K562 (cell line): ENCODE measurements at regions of chr7 and their contacts with region 1.

Region 1: DNA sequence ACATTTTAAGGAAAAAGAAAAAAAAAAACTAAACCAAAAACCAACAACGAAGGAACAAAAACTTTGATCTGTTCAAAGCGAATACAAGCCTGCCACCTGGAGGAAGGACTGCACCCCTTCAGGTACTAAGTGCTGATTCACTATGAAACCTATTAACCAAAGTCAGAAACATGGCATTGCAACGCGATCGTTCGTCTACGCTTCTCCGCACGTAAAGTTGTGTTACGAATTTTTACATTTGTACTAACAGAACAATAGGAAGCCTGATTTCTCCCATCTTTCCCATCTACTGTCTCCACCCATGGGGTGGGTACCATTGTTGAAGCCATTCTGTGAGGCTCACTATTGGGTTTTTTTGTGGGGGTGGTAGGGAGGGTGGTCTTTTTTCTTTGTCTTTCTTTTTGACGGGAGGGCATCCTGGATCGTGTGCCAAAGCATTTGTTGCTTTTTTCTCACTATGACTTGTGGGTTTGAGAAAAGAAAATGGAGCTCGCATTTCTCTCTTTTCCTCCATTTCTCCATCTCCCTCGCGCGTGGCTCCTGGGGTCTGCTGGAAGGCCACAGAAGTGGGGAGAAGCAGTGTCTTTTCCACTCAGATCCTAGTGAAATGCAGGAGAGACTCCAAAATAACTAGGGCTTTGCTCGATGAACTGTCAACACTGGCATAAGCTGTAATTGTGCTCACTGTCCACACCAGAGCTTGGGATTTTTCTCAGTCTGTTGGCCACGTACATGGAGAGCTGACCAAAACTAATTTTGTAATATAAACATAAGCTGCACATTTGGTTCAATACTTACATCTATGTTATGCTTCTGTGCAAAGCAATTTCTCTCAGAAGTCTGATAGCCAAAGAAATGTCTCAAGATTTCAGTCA is 100.9 kb upstream of the YAE1 start:
- DNase-seq: peak; percentile 52 to 70 (median 60)
- ATAC-seq: peak; percentile 95
- H3K4me3 ChIP-seq: no peak overlapping the region
- H3K27ac ChIP-seq: no peak overlapping the region
- H3K4me1 ChIP-seq: peaks cover 4 to 9% of the 10 kb centered on the region in 2 experiments; a peak in 4 of 5 replicates
- H3K27me3 ChIP-seq: peaks cover 7 to 8% of the 10 kb centered on the region in 2 experiments; a peak in 3 of 5 replicates
- CTCF ChIP-seq: peak; percentile 65 to 85 (median 80)
- EP300 ChIP-seq: no peak
- POLR2A ChIP-seq: no peak
- RAD21 ChIP-seq: peak; percentile 69 to 80

Region 2: DNA sequence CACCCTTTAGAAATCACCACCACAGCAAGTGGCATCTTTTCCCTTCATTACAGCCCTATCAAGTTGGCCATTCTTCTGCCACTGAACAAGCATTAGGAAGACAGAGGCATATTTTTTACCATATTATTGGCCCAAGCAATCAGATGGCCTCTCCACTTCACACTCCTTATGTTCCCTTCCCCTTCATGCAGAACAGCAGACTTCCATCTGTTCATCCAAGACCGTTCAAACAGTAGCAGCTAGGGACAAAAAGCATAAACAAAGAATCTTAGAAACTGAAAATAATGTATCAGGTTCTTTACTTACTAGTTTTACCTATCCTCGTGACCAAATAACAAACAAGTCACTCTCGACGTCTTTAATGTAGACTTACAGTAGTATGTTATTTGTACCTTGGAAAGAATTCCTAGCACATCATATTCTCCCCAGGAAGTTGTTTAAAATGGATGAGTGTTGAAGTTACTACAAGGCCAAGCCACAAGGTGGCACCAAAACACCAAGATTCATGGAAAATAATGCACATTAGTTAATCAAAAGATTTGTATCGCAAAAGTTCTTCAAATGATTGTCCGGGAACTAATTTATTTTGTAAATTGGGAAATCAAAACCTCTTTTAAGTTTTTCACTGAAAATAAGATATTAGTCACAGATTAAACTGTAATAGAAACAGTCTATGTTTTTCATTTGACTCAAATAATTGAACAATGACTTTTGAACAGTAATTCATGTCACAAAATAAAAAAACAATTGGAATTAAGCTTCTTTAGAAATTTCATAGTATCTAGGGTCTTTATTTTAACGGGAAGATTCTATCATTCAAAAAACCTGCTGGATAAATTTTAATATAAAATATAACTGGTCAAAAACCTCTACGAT is 668.4 kb before region 1 on chr7:
- CTCF ChIA-PET with region 1: interaction called, 20 read pairs
- POLR2A ChIA-PET with region 1: no interaction called
- in situ Hi-C with region 1: loop called (anchors 10 kb)
- intact Hi-C with region 1: loop called (anchors 1 kb)
- DNase-seq: peak; percentile 25 to 64 (median 37)
- ATAC-seq: peak; percentile 69
- H3K4me3 ChIP-seq: no peak overlapping the region
- H3K27ac ChIP-seq: no peak overlapping the region
- H3K4me1 ChIP-seq: no peaks in the 10 kb centered on the region
- H3K27me3 ChIP-seq: no peaks in the 10 kb centered on the region
- CTCF ChIP-seq: peak; percentile 22 to 78 (median 65); a peak in 5 of 6 replicates
- EP300 ChIP-seq: no peak
- POLR2A ChIP-seq: no peak
- RAD21 ChIP-seq: peak; percentile 79 to 88

Region 3: GRCh38 chr7:38932509-38933168 is 532.7 kb before region 1 on chr7:
- CTCF ChIA-PET with region 1: interaction called, 19 read pairs
- POLR2A ChIA-PET with region 1: no interaction called
- in situ Hi-C with region 1: loop called (anchors 5 kb)
- intact Hi-C with region 1: loop called (anchors 1 kb)
- DNase-seq: peak; percentile 42 to 74 (median 55)
- ATAC-seq: peak; percentile 75
- H3K4me3 ChIP-seq: no peak overlapping the region
- H3K27ac ChIP-seq: no peak overlapping the region
- H3K4me1 ChIP-seq: 0 out of 5 replicates have a peak, but pooled peaks cover 0 to 7% of the 10 kb centered on the region in 2 experiments
- H3K27me3 ChIP-seq: peaks cover 3 to 6% of the 10 kb centered on the region in 2 experiments; a peak in 2 of 5 replicates
- CTCF ChIP-seq: peak; percentile 67 to 89 (median 88)
- EP300 ChIP-seq: no peak
- POLR2A ChIP-seq: no peak
- RAD21 ChIP-seq: peak; percentile 79 to 84

Region 4: GRCh38 chr7:39075210-39075609 is 390.1 kb before region 1 on chr7:
- CTCF ChIA-PET with region 1: interaction called, 8 read pairs
- POLR2A ChIA-PET with region 1: no interaction called
- in situ Hi-C with region 1: no loop called
- intact Hi-C with region 1: loop called (anchors 2 kb)
- DNase-seq: no peak
- ATAC-seq: no peak
- H3K4me3 ChIP-seq: no peak overlapping the region
- H3K27ac ChIP-seq: no peak overlapping the region
- H3K4me1 ChIP-seq: no peaks in the 10 kb centered on the region
- H3K27me3 ChIP-seq: peaks cover 10 to 12% of the 10 kb centered on the region in 2 experiments; a peak in 3 of 5 replicates
- CTCF ChIP-seq: peak in 1 of 3 experiments; percentile 23; a peak in 1 of 6 replicates
- EP300 ChIP-seq: no peak
- POLR2A ChIP-seq: no peak
- RAD21 ChIP-seq: peak; percentile 20 to 22; a peak in 2 of 4 replicates

Region 5: DNA sequence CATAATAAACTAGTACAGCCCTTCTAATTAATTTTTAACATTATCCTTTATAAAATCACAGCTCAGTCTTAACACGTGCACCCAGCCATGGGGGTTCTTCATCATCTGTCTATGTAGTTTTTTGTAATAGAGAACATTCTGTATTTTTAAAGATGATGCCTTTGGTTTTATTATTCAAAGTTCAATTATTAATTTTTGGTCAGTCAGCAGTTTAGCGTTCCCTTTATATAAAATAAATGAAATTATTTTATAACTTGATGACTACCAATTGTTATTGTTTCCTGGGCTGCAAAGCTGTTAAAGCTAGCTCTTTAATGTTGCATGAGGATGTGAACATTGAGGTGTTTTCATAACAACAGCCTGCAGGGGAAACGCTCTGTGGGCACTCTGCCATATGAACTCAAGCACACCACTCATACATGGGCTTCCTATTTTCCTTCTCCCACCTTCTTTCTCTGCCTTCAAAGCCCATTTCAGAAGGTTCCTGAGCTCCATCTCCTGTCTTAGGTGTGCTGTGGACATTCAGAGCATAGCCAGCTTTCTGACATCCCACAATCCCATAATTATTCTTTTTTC is 71.1 kb before region 1 on chr7:
- CTCF ChIA-PET with region 1: no interaction called
- POLR2A ChIA-PET with region 1: no interaction called
- in situ Hi-C with region 1: no loop called
- intact Hi-C with region 1: loop called (anchors 5 kb)
- DNase-seq: no peak
- ATAC-seq: no peak
- H3K4me3 ChIP-seq: no peak overlapping the region
- H3K27ac ChIP-seq: no peak overlapping the region
- H3K4me1 ChIP-seq: no peaks in the 10 kb centered on the region
- H3K27me3 ChIP-seq: no peaks in the 10 kb centered on the region; a peak in 1 of 5 replicates
- CTCF ChIP-seq: no peak
- EP300 ChIP-seq: no peak
- POLR2A ChIP-seq: no peak
- RAD21 ChIP-seq: no peak

Region 6: DNA sequence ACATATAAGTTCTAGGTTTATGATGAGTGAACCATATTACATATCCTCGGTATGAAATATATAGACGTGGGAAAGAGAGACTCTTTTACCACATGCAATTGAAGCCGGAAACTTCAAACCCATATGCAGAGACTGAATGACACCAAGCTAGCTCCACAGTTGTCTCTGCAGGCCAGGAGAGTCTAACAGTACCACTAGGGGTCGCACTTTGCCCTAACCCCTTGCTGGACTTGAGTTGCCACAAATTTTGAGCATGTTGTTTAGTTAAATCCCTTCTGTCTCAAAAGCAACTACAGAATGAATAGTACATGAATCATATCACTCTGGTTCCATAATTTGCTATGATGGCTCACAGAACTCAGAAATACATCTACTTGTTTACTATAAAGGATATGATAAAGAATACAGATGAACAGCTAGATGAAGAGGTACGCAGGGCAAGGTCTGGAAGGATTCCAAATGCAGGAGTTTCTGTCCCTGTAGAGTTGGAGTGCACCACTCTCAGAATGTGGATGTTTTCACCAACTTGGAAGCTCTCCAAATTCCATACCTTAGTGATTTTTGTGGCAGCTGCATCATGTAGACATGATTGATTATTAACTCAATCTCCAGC is 11.4 kb before region 1 on chr7:
- CTCF ChIA-PET with region 1: no interaction called
- POLR2A ChIA-PET with region 1: no interaction called
- in situ Hi-C with region 1: no loop called
- intact Hi-C with region 1: no loop called
- DNase-seq: peak; percentile 51 to 74 (median 54)
- ATAC-seq: peak; percentile 93
- H3K4me3 ChIP-seq: no peak overlapping the region
- H3K27ac ChIP-seq: no peak overlapping the region
- H3K4me1 ChIP-seq: peaks cover 0 to 5% of the 10 kb centered on the region in 2 experiments; a peak in 1 of 5 replicates
- H3K27me3 ChIP-seq: peaks cover 0 to 5% of the 10 kb centered on the region in 2 experiments; a peak in 1 of 5 replicates
- CTCF ChIP-seq: peak; percentile 76 to 85 (median 80)
- EP300 ChIP-seq: no peak
- POLR2A ChIP-seq: no peak
- RAD21 ChIP-seq: peak; percentile 43 to 67

Region 7: GRCh38 chr7:39517240-39517639 is 51.9 kb after region 1 on chr7:
- CTCF ChIA-PET with region 1: interaction called, 3 read pairs
- POLR2A ChIA-PET with region 1: no interaction called
- in situ Hi-C with region 1: no loop called
- intact Hi-C with region 1: loop called (anchors 5 kb)
- DNase-seq: no peak
- ATAC-seq: no peak
- H3K4me3 ChIP-seq: no peak overlapping the region
- H3K27ac ChIP-seq: no peak overlapping the region
- H3K4me1 ChIP-seq: no peaks in the 10 kb centered on the region; a peak in 1 of 5 replicates
- H3K27me3 ChIP-seq: peaks cover 8 to 22% of the 10 kb centered on the region in 2 experiments; a peak in 3 of 5 replicates
- CTCF ChIP-seq: no peak
- EP300 ChIP-seq: no peak
- POLR2A ChIP-seq: no peak
- RAD21 ChIP-seq: no peak

Region 8: DNA sequence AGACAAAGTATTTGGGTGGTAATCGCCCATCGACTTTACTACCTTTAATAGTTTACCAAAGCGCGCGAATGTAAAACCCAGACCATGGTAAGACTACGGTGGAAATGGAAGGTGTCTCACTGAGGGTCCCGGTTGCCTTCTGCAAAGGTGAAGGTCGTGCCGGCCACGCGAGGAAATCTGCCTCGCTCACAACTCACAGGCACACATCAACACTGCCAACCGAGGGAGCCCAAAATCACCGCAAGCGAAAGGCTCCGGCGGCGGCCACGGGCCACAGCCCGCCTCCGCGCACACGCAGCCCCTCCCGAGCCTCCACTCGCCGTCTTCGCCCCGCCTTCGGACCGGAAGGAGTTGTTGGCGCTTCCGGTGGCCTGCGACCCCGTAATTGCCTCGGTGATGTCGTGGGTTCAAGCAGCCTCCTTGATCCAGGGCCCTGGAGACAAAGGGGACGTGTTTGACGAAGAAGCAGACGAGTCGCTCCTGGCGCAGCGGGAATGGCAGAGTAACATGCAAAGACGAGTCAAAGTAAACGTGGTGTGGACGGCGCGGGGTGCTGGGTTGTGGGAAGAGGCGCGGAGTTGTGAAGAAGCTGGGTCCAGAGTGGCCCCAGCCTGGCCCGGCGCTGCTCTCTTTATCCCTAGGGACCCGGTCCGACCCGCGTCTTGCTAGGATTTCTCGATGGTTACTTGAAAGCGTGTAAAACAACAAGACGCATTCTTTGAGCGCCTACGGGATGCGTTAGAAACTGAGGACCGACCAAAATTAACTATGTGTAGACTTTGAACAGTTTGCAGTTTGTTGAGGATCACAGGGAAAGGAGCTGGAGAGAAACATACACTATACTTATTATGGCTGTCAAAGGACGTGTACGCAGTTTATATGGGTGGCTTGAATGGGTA is 101.0 kb after region 1 on chr7 and contains the start of gene YAE1:
- CTCF ChIA-PET with region 1: no interaction called
- POLR2A ChIA-PET with region 1: no interaction called
- in situ Hi-C with region 1: no loop called
- intact Hi-C with region 1: no loop called
- DNase-seq: peak; percentile 89 to 93 (median 91)
- ATAC-seq: peak; percentile 98
- H3K4me3 ChIP-seq: peak within 1 kb of the TSS; percentile 67
- H3K27ac ChIP-seq: peak within 1 kb of the TSS; percentile 85
- H3K4me1 ChIP-seq: peaks cover 0 to 2% of the 10 kb centered on the region in 2 experiments; a peak in 3 of 5 replicates
- H3K27me3 ChIP-seq: no peaks in the 10 kb centered on the region
- CTCF ChIP-seq: no peak
- EP300 ChIP-seq: 0 out of 2 replicates have a peak, but pooled peaks have one; percentile 6
- POLR2A ChIP-seq: peak; percentile 96
- RAD21 ChIP-seq: no peak
- polyA plus RNA-seq, gene YAE1: 60.6 to 63.4 TPM